ENCODE measurements at regions of chr3 and their contacts with region 1.

Region 1: DNA sequence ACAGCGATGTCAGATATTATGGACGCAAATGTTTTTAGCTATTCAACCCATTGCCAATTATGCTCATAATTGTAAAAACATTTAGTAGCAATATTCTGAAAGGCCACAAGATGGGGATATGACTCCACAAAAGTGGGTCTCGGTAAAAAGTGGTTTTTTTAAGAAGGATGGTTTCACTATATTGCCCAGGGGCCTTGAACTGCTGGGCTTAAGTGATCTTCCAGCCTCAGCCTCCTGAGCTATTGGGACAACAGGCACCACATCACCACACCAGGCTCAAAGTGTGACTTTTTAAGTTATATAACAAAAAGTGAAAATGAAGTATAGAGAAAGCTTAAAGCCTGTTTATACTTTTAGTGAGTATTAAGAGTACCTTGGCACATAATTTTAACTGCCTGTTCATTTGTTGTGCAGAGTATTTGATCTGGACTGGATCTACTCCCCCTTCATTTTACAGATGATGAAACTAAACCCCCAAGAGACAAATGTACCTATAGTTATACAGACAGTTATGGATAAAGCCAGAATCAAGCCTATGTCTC is 9.4 kb downstream of the NAA50 start:
- DNase-seq: peak; percentile 44
- ATAC-seq: peak; percentile 77
- H3K4me3 ChIP-seq: no peak overlapping the region
- H3K27ac ChIP-seq: peak overlapping the region; percentile 40; the same call in 1 of the 2 replicates
- H3K4me1 ChIP-seq: peaks cover 6% of the 10 kb centered on the region; the same call in 1 of the 2 replicates
- H3K27me3 ChIP-seq: no peaks in the 10 kb centered on the region
- CTCF ChIP-seq: peak; percentile 46 to 81 (median 69); a peak in 5 of 6 replicates
- EP300 ChIP-seq: no peak
- POLR2A ChIP-seq: no peak
- RAD21 ChIP-seq: peak; percentile 95

Region 2: DNA sequence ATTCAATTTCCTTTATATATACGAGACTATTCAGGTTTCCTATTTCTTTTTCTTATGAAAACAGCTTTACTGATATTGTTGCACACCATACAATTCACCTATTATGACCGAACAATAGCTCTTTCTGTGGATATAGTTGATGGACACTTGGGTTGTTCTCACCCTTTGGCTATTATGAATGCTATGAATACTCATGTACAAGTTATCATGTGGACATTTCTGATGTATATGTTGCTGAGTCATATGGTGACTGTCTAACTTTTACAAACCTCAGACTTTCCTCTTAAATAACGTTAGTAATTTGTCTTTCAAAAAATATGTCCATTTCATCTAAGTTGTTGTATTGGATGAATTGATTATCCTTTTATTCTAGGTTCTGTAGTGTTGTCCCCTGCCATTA is 24.5 kb before region 1 on chr3:
- CTCF ChIA-PET with region 1: interaction called, 12 read pairs
- POLR2A ChIA-PET with region 1: no interaction called
- RAD21 ChIA-PET with region 1: interaction called, 4 read pairs
- SMC1A ChIA-PET with region 1: interaction called, 13 read pairs
- in situ Hi-C with region 1: no loop called
- intact Hi-C with region 1: no loop called
- DNase-seq: no peak
- ATAC-seq: peak; percentile 47
- H3K4me3 ChIP-seq: no peak overlapping the region
- H3K27ac ChIP-seq: no peak overlapping the region
- H3K4me1 ChIP-seq: no peaks in the 10 kb centered on the region
- H3K27me3 ChIP-seq: no peaks in the 10 kb centered on the region
- CTCF ChIP-seq: no peak
- EP300 ChIP-seq: no peak
- POLR2A ChIP-seq: no peak
- RAD21 ChIP-seq: no peak

Region 3: GRCh38 chr3:113751141-113751540 is 14.5 kb after region 1 on chr3:
- CTCF ChIA-PET with region 1: interaction called, 71 read pairs
- POLR2A ChIA-PET with region 1: interaction called, 30 read pairs
- RAD21 ChIA-PET with region 1: interaction called, 48 read pairs
- SMC1A ChIA-PET with region 1: interaction called, 55 read pairs
- in situ Hi-C with region 1: no loop called
- intact Hi-C with region 1: no loop called
- DNase-seq: no peak
- ATAC-seq: no peak
- H3K4me3 ChIP-seq: no peak overlapping the region
- H3K27ac ChIP-seq: no peak overlapping the region
- H3K4me1 ChIP-seq: peaks cover 10% of the 10 kb centered on the region; the same call in 1 of the 2 replicates
- H3K27me3 ChIP-seq: no peaks in the 10 kb centered on the region
- CTCF ChIP-seq: no peak
- EP300 ChIP-seq: no peak
- POLR2A ChIP-seq: no peak
- RAD21 ChIP-seq: no peak

Region 4: DNA sequence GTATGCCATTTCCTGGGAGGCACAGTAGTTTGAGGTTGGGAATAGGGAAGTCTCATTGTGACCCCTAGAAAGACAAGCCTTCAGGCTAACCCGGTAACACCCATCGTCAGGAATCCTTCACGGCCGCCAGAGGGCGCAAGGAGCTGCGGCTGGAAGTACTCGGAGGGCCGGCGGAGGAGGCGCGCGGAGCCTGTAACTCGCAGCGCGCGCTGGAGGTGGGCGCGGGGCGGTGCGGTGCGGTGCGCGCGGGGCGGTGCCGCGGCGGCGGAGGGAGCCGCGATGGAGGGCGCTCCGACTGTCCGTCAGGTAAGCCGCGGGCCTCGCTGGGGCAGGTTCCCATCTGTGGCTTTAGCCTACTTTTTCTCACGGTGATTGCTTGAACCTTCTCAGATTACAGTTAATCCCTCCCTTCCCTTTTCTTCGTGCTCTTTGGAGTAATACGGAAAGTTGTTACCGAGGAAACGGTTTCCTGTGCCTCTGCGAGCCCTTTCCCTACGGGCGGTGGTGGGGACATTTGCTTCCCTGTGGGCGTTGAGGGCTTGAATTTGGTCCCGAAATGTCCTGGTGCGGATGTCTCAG is 102.1 kb after region 1 on chr3 and contains the start of gene GRAMD1C:
- CTCF ChIA-PET with region 1: interaction called, 42 read pairs
- POLR2A ChIA-PET with region 1: no interaction called
- RAD21 ChIA-PET with region 1: interaction called, 13 read pairs
- SMC1A ChIA-PET with region 1: interaction called, 26 read pairs
- in situ Hi-C with region 1: no loop called
- intact Hi-C with region 1: no loop called
- DNase-seq: peak; percentile 59
- ATAC-seq: peak; percentile 98
- H3K4me3 ChIP-seq: peak within 1 kb of the TSS; percentile 54
- H3K27ac ChIP-seq: no peak within 1 kb of the TSS
- H3K4me1 ChIP-seq: peaks cover 3% of the 10 kb centered on the region; the same call in 1 of the 2 replicates
- H3K27me3 ChIP-seq: no peaks in the 10 kb centered on the region
- CTCF ChIP-seq: peak; percentile 86 to 89 (median 88)
- EP300 ChIP-seq: no peak
- POLR2A ChIP-seq: peak; percentile 40; the same call in 1 of the 2 replicates
- RAD21 ChIP-seq: peak; percentile 75
- polyA plus RNA-seq, gene GRAMD1C: 3.2 to 8.4 TPM

Region 5: DNA sequence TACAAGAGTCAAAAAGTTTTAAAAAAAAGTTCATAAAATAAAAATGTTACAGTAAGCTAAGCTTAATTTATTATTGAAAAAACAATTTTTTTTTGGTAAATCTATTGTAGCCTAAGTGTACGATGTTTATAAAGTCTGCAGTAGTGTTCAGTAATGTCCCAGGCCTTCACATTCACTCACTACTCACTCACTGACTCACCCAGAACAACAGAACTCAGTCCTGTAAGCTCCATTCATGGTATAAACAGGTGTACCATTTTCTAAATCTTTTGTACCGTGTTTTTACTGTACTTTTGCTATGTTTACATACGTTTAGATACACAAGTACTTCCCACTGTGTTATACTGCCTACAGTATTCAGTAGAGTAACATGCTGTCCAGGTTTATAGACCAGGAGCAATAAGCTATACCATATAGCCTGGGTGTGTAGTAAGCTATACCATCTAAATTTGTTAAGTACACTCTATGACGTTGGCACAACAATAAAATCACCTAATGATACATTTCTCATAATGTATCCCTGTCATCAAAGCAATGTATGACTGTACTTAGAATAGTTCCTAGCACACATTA is 170.0 kb after region 1 on chr3:
- CTCF ChIA-PET with region 1: interaction called, 33 read pairs
- POLR2A ChIA-PET with region 1: no interaction called
- RAD21 ChIA-PET with region 1: interaction called, 7 read pairs
- SMC1A ChIA-PET with region 1: interaction called, 12 read pairs
- in situ Hi-C with region 1: loop called (anchors 5 kb)
- intact Hi-C with region 1: no loop called
- DNase-seq: no peak
- ATAC-seq: no peak
- H3K4me3 ChIP-seq: no peak overlapping the region
- H3K27ac ChIP-seq: no peak overlapping the region
- H3K4me1 ChIP-seq: no peaks in the 10 kb centered on the region
- H3K27me3 ChIP-seq: no peaks in the 10 kb centered on the region
- CTCF ChIP-seq: no peak
- EP300 ChIP-seq: no peak
- POLR2A ChIP-seq: no peak
- RAD21 ChIP-seq: no peak

Region 6: DNA sequence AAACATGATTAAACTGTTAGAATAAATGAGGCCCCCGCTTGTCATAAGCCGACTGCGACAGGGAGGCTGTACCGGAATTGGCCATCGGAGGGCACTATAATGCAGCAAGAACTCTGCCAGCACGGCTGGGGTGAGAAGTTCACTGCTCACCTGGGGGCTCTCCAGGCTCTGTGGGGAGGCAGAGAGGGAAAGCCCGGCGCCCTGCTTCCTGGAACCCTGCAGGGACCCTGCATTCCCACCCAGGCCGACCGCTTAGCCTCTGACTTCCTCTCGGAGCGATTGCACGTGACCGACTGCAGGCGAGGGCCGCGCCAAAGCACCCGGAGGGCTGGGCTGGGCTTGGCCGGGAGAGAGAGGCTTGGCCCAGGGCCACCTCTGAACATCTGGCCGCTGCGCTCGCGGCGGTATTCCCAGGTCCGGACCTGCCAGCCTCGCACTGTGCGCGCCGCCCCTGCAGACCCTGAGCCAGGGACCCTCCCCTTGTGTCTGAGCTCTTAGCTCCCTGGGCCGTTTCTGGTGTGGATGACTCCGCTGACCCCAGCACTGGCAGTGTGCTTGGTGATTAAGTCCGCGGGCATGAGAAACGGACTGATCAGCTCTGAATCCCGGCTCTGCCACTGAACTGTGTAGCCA is 416.0 kb after region 1 on chr3:
- CTCF ChIA-PET with region 1: interaction called, 16 read pairs
- POLR2A ChIA-PET with region 1: no interaction called
- RAD21 ChIA-PET with region 1: interaction called, 3 read pairs
- SMC1A ChIA-PET with region 1: interaction called, 5 read pairs
- in situ Hi-C with region 1: loop called (anchors 10 kb)
- intact Hi-C with region 1: loop called (anchors 5 kb)
- DNase-seq: peak; percentile 33
- ATAC-seq: peak; percentile 94
- H3K4me3 ChIP-seq: peak overlapping the region; percentile 45; the same call in 1 of the 2 replicates
- H3K27ac ChIP-seq: no peak overlapping the region
- H3K4me1 ChIP-seq: no peaks in the 10 kb centered on the region; the same call in 1 of the 2 replicates
- H3K27me3 ChIP-seq: 0 out of 4 replicates have a peak, but pooled peaks cover 0 to 1% of the 10 kb centered on the region in 2 experiments
- CTCF ChIP-seq: peak; percentile 86 to 95 (median 94)
- EP300 ChIP-seq: 0 out of 4 replicates have a peak, but pooled peaks of 1 of the 2 experiments have one; percentile 3
- POLR2A ChIP-seq: no peak
- RAD21 ChIP-seq: peak; percentile 93